ENCODE measurements at regions of chr18 and their contacts with region 1.

Region 1: GRCh38 chr18:65091744-65092329 is 659.0 kb upstream of the CDH7 start:
- DNase-seq: peak; percentile 14
- ATAC-seq: peak; percentile 50; the same call in 1 of the 3 replicates
- H3K4me3 ChIP-seq: no peak overlapping the region
- H3K27ac ChIP-seq: no peak overlapping the region
- H3K4me1 ChIP-seq: no peaks in the 10 kb centered on the region
- H3K27me3 ChIP-seq: no peaks in the 10 kb centered on the region
- CTCF ChIP-seq: peak; percentile 42; the same call in 1 of the 2 replicates
- EP300 ChIP-seq: no peak
- POLR2A ChIP-seq: no peak
- RAD21 ChIP-seq: no peak

Region 2: DNA sequence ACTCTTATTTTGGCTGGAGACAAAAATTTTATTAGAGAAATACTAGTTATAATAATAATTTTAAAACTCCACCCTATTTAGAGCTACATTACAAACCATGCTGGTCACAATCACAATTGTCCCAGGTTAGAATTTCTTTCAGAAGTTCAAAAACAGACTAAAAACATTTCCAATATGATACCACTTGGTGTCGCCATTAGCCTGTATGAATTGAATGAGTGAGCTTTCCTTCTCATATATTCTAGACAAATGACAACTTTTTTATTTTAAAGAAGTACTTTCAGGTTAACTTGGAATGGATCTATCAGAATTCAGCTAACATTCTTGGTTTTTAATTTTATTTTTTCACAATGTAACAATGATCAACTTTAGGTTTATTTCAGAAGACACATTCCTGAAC is 1074.0 kb before region 1 on chr18:
- CTCF ChIA-PET with region 1: no interaction called
- POLR2A ChIA-PET with region 1: no interaction called
- in situ Hi-C with region 1: no loop called
- intact Hi-C with region 1: loop called (anchors 2 kb)
- DNase-seq: peak; percentile 23
- ATAC-seq: no peak
- H3K4me3 ChIP-seq: no peak overlapping the region
- H3K27ac ChIP-seq: no peak overlapping the region
- H3K4me1 ChIP-seq: no peaks in the 10 kb centered on the region
- H3K27me3 ChIP-seq: no peaks in the 10 kb centered on the region
- CTCF ChIP-seq: peak; percentile 43
- EP300 ChIP-seq: no peak
- POLR2A ChIP-seq: no peak
- RAD21 ChIP-seq: no peak

Region 3: DNA sequence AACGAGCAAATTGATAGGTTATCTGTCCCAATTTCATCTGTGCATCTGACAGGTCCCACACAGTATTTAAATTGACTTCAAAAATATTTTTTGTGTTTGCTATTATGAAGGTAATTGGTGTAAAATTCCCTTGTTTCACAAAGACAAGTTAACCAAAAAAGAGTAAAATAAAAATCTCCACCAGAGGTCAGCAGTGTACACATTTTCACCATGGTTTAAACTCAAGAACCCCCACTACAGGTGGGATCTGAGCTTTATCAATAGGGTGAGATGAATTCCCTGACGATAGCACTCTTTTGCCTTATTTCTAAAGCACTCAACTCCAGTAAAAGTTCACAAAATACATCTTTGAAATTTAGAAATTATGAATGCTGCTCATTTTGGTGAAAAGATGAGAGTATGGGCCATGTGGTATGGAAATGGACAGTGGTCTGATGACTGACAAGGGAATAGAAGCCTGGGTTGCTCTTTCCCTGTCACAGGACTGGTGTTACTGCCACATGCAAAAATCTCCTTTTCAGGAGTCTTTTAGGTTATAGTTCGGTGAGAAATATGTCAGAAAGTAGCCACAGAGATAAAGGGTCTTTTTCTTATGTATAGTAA is 1053.9 kb before region 1 on chr18:
- CTCF ChIA-PET with region 1: no interaction called
- POLR2A ChIA-PET with region 1: no interaction called
- in situ Hi-C with region 1: no loop called
- intact Hi-C with region 1: loop called (anchors 2 kb)
- DNase-seq: peak; percentile 50
- ATAC-seq: peak; percentile 70
- H3K4me3 ChIP-seq: no peak overlapping the region
- H3K27ac ChIP-seq: no peak overlapping the region
- H3K4me1 ChIP-seq: no peaks in the 10 kb centered on the region
- H3K27me3 ChIP-seq: no peaks in the 10 kb centered on the region
- CTCF ChIP-seq: peak; percentile 53
- EP300 ChIP-seq: no peak
- POLR2A ChIP-seq: no peak
- RAD21 ChIP-seq: no peak